ENCODE measurements at regions of chr1 and their contacts with region 1.

Region 1: GRCh38 chr1:235984041-235984825 is 80.7 kb downstream of the NID1 start:
- DNase-seq: peak; percentile 90
- ATAC-seq: peak; percentile 89
- H3K4me3 ChIP-seq: no peak overlapping the region
- H3K27ac ChIP-seq: peak overlapping the region; percentile 73
- H3K4me1 ChIP-seq: peaks cover 14% of the 10 kb centered on the region
- H3K27me3 ChIP-seq: no peaks in the 10 kb centered on the region
- CTCF ChIP-seq: no peak
- POLR2A ChIP-seq: no peak
- RAD21 ChIP-seq: no peak

Region 2: DNA sequence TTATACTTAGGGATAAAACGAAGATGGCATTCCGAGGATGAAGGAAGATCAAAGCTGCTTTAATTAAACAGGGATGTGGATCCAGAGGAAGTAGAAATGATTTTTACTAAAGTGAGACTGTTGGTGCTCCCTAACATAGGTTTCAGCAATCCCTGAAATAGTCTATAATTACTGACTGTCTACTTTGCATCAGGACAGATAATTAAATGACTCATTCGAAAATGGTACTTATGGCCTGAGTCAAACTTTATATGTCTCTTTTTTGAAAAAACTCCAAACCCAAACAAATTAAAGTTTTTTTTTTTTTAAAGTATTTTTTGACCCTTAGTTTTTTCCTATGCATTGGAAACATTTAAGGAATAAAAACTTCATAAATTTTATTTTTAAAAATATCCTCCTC is 207.8 kb before region 1 on chr1:
- CTCF ChIA-PET with region 1: no interaction called
- POLR2A ChIA-PET with region 1: no interaction called
- dilution Hi-C with region 1: no loop called
- in situ Hi-C with region 1: no loop called
- intact Hi-C with region 1: no loop called
- DNase-seq: peak; percentile 23
- ATAC-seq: no peak
- H3K4me3 ChIP-seq: no peak overlapping the region
- H3K27ac ChIP-seq: no peak overlapping the region
- H3K4me1 ChIP-seq: no peaks in the 10 kb centered on the region
- H3K27me3 ChIP-seq: no peaks in the 10 kb centered on the region
- CTCF ChIP-seq: no peak
- POLR2A ChIP-seq: no peak
- RAD21 ChIP-seq: no peak

Region 3: DNA sequence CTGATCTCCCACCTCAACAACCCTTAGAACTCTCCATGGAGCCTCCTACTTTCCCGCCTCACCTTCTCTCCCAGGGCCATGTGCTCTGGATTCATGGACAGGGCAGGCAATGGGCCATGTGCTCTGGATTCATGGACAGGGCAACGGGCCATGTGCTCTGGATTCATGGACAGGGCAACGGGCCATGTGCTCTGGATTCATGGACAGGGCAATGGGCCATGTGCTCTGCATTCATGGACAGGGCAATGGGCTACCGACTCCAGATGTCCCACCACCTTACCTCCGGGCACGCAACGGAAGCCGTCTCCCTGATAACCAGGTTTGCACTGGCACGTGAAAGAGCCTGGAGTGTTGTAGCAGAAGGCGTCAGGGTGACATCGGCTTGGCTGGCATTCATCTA is 27.4 kb after region 1 on chr1:
- CTCF ChIA-PET with region 1: no interaction called
- POLR2A ChIA-PET with region 1: no interaction called
- dilution Hi-C with region 1: no loop called
- in situ Hi-C with region 1: no loop called
- intact Hi-C with region 1: no loop called
- DNase-seq: no peak
- ATAC-seq: no peak
- H3K4me3 ChIP-seq: no peak overlapping the region
- H3K27ac ChIP-seq: no peak overlapping the region
- H3K4me1 ChIP-seq: peaks cover 13% of the 10 kb centered on the region
- H3K27me3 ChIP-seq: no peaks in the 10 kb centered on the region
- CTCF ChIP-seq: no peak
- POLR2A ChIP-seq: no peak
- RAD21 ChIP-seq: no peak

Region 4: GRCh38 chr1:236039740-236040685 is 55.8 kb after region 1 on chr1:
- CTCF ChIA-PET with region 1: no interaction called
- POLR2A ChIA-PET with region 1: no interaction called
- dilution Hi-C with region 1: no loop called
- in situ Hi-C with region 1: no loop called
- intact Hi-C with region 1: loop called (anchors 10 kb)
- DNase-seq: peak; percentile 79
- ATAC-seq: peak; percentile 85
- H3K4me3 ChIP-seq: no peak overlapping the region
- H3K27ac ChIP-seq: peak overlapping the region; percentile 87; the same call in 1 of the 2 replicates
- H3K4me1 ChIP-seq: peaks cover 6% of the 10 kb centered on the region
- H3K27me3 ChIP-seq: no peaks in the 10 kb centered on the region
- CTCF ChIP-seq: no peak
- POLR2A ChIP-seq: no peak
- RAD21 ChIP-seq: no peak

Region 5: DNA sequence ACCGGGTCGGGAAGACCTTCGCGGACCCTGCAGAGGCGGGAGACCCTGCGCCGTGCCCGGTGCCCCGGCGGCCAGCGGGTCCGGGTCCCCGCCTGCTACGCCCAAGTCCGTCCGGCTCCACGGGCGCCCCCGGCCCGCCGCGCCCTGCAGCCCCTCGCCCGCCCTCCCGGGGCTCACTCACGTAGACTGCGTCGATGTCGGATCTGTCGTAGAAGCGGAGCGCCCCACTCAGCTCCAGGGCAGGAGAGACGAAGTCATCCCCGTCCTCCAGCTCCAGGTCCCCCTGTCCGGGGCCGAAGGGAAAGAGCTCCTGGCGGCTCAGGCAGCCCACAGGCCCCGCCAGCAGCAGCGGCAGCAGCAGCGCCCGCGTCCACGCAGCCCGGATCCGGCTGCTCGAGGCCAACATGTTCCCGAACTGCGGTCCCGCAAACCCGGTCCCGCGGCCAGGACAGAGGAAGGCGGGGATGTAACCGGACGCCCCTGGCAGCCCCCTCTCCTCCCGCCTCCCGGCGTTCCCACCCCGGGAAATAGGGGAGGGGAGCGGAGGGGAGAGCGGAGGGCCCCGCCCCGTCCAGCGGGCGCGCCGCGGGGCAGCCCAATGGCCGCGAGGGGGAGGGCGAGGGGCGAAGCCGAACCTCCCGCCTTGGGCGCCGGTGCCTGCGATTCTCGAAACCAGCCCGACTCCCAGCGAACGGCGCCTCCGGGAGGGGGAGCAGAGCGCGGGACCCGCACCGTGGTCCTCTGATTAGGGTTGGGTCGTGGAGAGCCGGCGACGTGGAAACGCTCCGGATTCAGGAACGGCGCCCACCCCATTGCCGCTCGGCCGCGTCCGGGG is 80.7 kb after region 1 on chr1 and contains the start of gene NID1:
- CTCF ChIA-PET with region 1: no interaction called
- POLR2A ChIA-PET with region 1: no interaction called
- dilution Hi-C with region 1: no loop called
- in situ Hi-C with region 1: no loop called
- intact Hi-C with region 1: loop called (anchors 1 kb)
- DNase-seq: peak; percentile 79
- ATAC-seq: peak; percentile 90
- H3K4me3 ChIP-seq: peak within 1 kb of the TSS; percentile 78
- H3K27ac ChIP-seq: peak within 1 kb of the TSS; percentile 50
- H3K4me1 ChIP-seq: peaks cover 3% of the 10 kb centered on the region; the same call in 1 of the 2 replicates
- H3K27me3 ChIP-seq: no peaks in the 10 kb centered on the region
- CTCF ChIP-seq: peak; percentile 36
- POLR2A ChIP-seq: 0 out of 2 replicates have a peak, but pooled peaks have one; percentile 22
- RAD21 ChIP-seq: no peak
- total RNA-seq, gene NID1: 21.9 and 23.9 TPM in 2 replicates

Region 6: DNA sequence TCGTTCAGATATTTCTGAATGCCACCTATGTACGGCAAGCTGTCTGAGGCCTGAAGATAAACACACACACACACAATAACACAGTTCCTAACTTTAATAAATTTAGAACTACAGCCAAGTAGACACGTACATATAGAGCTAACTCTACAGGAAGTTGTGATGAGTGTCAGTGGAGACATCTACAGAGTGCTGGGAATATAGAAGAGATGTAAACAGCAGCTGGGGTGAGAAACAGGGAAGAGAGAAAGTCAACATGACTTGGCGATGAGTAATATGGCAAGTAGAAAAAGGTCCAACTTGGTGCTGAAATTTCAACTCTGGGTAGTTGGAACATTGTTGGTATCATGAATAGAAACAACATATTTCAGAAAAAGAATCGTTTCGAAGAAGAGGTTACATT is 1700.0 kb after region 1 on chr1:
- CTCF ChIA-PET with region 1: no interaction called
- POLR2A ChIA-PET with region 1: no interaction called
- dilution Hi-C with region 1: no loop called
- in situ Hi-C with region 1: no loop called
- intact Hi-C with region 1: no loop called
- DNase-seq: peak; percentile 62
- ATAC-seq: peak; percentile 56
- H3K4me3 ChIP-seq: no peak overlapping the region
- H3K27ac ChIP-seq: no peak overlapping the region
- H3K4me1 ChIP-seq: peaks cover 2% of the 10 kb centered on the region; the same call in 1 of the 2 replicates
- H3K27me3 ChIP-seq: no peaks in the 10 kb centered on the region
- CTCF ChIP-seq: no peak
- POLR2A ChIP-seq: no peak
- RAD21 ChIP-seq: no peak

Measured in IMR-90 (cell line).